ENCODE measurements at regions of chr7 and their contacts with region 1.

Region 1: DNA sequence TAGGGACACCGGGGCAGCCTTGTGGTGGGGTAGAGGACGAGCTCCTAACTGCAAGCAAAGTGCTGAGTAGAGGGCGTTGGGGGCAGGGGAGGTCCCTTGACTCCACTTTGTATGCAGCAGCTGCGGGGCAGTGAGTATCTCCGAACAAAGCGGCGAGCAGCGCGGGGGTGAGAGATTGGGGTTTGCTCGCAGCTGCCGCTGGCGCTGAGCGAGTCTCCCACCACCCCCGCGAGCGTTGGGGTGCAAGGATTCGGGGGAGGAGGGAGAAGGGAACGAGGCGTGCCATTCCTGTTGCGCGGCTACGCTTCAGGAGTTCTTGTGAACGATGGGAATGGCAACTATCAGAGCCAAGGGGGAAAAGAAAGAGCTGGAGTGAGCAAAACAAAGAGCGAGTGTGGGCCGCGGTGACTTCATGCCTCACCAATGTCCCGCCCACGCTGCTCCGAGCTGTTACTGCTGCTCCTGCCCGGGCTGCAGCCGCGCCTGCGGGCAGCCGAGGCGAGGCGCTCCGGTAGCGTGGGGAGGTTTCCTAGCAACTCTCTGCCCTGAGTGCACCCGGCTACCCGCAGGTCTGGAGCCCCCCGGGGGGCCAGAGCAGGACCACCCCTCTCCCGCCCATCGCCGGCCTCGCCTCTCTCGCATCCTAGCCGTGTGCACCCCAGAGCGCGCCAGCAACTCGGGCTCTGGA is at the start of gene ITGB8:
- DNase-seq: peak; percentile 85
- H3K4me3 Mint-ChIP-seq: peak within 1 kb of the TSS; percentile 78
- H3K27ac Mint-ChIP-seq: no peak within 1 kb of the TSS
- H3K4me1 Mint-ChIP-seq: peaks cover 20% of the 10 kb centered on the region
- H3K27me3 Mint-ChIP-seq: peaks cover 30% of the 10 kb centered on the region
- total RNA-seq, gene ITGB8: not detected

Region 2: DNA sequence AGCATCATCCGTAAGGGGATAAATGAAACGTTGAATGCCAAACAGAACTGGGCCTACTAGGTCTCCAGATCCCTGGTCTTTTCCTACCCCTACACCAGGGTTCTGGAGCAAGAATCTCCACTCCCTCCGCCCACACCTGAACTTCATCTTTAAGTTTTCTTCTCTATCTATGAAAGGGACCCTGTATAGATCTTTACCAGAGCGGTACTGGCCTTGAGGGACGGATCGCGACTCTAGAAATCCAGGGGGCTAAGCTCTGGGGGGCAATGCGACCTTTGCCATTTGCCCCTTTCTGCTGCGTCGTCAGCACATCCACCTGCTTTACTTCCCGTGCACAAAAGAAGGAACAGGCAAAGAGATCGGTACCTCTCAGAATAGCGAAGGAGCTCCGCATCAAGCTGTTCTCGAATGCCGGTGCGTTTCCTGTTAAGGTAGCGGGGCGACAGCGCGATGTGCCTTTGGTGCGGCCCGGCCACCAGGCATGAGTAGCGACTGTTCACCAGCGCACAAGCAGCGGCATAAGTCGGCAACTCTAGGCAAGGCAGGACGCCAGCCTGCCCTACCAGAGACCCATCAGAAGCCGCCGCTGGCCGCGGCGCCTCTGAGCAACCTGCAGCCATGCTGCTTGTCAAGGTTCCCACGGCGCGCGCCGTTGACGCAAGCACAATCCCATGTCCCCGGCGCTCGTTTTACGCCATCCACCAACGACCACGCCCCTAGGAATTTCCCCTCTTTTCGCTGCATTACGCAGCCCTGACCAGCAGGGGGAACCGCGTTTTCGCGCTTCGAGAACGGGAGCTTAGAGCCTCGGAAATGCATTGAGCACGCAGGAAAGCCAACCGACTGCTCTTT is 621.8 kb before region 1 on chr7 and contains the start of gene POLR1F:
- CTCF ChIA-PET with region 1: interaction called, 3 read pairs
- POLR2A ChIA-PET with region 1: no interaction called
- intact Hi-C with region 1: loop called (anchors 5 kb)
- DNase-seq: peak; percentile 96
- H3K4me3 Mint-ChIP-seq: peak within 1 kb of the TSS; percentile 81
- H3K27ac Mint-ChIP-seq: peak within 1 kb of the TSS; percentile 78
- H3K4me1 Mint-ChIP-seq: peaks cover 37% of the 10 kb centered on the region
- H3K27me3 Mint-ChIP-seq: peaks cover 3% of the 10 kb centered on the region
- total RNA-seq, gene POLR1F: 20.0 to 21.9 TPM

Region 3: GRCh38 chr7:20050241-20050966 is 280.0 kb before region 1 on chr7:
- CTCF ChIA-PET with region 1: no interaction called
- POLR2A ChIA-PET with region 1: no interaction called
- intact Hi-C with region 1: no loop called
- DNase-seq: no peak
- H3K4me3 Mint-ChIP-seq: no peak overlapping the region
- H3K27ac Mint-ChIP-seq: no peak overlapping the region
- H3K4me1 Mint-ChIP-seq: no peaks in the 10 kb centered on the region
- H3K27me3 Mint-ChIP-seq: no peaks in the 10 kb centered on the region

Region 4: DNA sequence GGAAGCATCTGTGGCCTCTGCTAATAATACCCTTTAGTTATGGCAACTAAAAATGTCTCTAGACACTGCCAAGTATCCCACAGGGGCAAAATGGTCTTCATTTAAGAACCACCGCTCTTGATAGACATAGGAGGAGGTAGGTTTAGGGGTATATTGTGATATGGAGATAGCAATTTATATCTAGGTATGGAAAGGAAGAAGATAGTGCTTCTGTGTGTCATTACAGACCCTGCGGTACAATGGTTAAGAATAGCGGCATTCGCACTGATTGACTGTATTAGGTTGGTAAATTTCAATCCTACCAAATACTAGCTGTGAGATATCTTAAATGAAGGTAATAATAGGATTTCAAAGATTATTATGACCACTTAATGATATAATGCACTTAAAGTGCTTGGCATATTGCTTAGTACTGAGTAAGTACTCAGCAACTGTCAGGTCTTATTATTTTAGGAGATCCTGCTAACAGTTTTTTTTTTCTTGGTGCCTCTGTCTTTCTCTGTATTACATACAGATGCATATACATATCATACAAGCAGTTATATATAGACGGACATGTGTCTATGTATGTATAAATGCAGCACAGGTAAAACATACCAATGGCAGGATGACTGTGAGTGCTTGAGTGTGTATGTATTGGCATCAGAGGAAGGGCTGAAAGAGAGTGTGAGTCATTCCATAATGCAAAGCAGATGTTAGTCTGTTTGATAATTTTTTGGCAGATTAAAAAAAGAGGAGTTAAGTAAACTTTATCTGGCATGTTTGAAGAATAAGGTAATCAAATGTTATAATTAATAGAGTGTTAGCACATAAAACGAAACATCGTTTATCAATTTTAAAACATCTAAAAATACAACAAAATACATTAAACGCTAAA is 49.7 kb before region 1 on chr7:
- CTCF ChIA-PET with region 1: no interaction called
- POLR2A ChIA-PET with region 1: no interaction called
- intact Hi-C with region 1: loop called (anchors 2 kb)
- DNase-seq: no peak
- H3K4me3 Mint-ChIP-seq: no peak overlapping the region
- H3K27ac Mint-ChIP-seq: no peak overlapping the region
- H3K4me1 Mint-ChIP-seq: no peaks in the 10 kb centered on the region
- H3K27me3 Mint-ChIP-seq: no peaks in the 10 kb centered on the region

Region 5: DNA sequence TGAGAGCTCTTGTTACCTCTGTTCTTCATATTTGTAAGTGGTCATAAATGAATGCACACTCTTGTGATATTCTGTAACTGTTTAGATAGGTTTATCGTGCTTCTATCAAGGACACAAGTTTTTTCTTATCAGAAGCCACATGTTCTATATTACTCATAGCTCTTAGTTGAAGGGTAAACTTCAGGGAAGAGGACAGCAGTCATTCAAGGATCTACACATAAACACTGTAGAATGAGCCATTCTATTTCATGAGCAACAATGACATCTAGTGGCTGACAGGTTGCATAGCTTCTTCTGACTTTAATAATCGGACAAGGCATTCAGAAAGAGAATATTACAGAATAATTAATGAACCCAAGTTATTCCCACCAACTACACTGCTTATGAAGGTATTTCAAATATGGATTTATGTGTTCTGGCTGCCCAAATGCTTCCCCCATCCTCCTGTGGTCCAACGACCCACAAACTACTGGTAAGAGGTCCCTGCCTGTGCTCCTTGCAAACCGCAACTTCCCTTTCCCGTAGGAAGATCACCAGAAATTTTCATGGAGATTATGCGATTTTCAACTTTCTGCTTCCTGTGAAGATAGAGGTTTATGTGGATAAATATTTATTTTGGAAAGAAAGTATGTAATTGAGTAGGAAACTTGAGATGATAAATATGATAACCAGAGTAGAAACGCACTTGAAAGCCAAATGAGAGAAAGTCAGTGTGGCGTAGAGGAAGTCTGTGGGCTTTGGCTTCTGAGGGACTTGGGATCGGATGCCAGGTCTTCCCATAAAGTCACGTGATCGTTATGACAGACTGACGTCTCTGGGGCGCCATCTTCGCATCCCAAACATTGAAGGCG is 268.3 kb after region 1 on chr7:
- CTCF ChIA-PET with region 1: no interaction called
- POLR2A ChIA-PET with region 1: no interaction called
- intact Hi-C with region 1: loop called (anchors 5 kb)
- DNase-seq: no peak
- H3K4me3 Mint-ChIP-seq: no peak overlapping the region
- H3K27ac Mint-ChIP-seq: no peak overlapping the region
- H3K4me1 Mint-ChIP-seq: no peaks in the 10 kb centered on the region
- H3K27me3 Mint-ChIP-seq: peaks cover 12% of the 10 kb centered on the region

Region 6: GRCh38 chr7:20786779-20787659 is 456.6 kb after region 1 on chr7 and contains the start of gene SP8:
- CTCF ChIA-PET with region 1: no interaction called
- POLR2A ChIA-PET with region 1: no interaction called
- intact Hi-C with region 1: loop called (anchors 10 kb)
- DNase-seq: peak; percentile 43
- H3K4me3 Mint-ChIP-seq: peak within 1 kb of the TSS; percentile 53
- H3K27ac Mint-ChIP-seq: peak within 1 kb of the TSS; percentile 40
- H3K4me1 Mint-ChIP-seq: peaks cover 26% of the 10 kb centered on the region
- H3K27me3 Mint-ChIP-seq: peaks cover 73% of the 10 kb centered on the region
- total RNA-seq, gene SP8: not detected

Measured in activated CD4-positive, alpha-beta memory T cell treated with anti-CD3 and anti-CD28 coated beads for 36 hours (primary cell).